ENCODE measurements at regions of chr12 and their contacts with region 1.

Region 1: DNA sequence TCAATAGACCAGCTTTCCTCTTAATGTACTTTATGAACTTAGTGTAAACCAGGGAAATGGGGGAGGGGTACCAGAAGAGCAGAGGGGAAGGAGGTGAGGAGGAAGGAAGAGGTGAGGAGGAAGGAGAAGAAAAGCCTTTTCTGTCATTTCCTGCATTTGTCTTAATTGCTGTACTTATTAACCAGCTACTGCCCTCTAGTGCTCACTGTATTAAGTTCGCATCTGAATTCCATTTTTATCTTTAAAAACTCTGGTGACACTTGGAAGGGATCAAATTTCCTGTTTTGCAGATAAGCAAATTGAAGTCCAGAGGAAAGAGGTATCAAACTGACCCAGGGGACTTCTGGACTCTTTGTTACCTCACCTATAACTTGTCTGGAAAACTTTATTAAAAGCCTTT is 22.2 kb downstream of the MANSC1 start:
- DNase-seq: no peak
- ATAC-seq: peak; percentile 41

Region 2: GRCh38 chr12:12081836-12082497 is 245.8 kb before region 1 on chr12:
- intact Hi-C with region 1: loop called (anchors 10 kb)
- DNase-seq: no peak
- ATAC-seq: peak; percentile 86

Region 3: DNA sequence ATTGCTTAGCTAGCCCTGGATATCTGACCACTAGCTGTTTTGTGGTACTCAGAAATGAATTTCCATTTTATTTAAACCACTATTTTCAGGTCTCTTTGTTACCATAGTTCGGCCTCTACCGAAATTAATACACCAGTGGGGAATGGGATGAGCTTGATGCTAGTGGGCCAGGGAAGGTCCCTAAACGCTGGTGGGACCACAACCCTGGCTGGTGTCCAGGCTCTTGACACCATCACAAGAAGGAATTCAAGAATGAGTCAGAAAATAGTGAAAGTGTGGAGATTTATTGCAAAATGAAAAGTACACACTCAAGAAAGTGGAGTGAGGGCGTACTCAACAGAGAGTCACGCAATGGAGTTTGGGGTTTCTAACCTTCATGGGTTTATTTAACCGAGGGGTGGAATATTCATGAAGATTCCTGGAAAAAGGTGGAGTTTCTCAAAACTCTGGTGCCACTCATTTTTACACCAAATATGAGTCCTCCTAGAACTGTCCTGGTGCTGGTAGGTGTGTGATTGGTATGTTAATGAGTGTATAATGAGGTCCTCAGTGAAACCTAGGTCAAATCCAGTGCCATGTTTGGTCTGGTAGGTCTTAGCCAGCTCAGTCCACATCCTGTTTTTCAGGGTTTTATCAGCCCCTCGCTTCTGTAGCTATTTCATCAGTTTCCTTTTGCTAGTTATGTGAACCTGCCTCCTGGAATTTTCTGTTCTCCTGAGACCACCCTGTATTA is 22.1 kb before region 1 on chr12:
- intact Hi-C with region 1: no loop called
- DNase-seq: no peak
- ATAC-seq: no peak

Region 4: GRCh38 chr12:12611512-12612306 is 283.9 kb after region 1 on chr12 and contains the start of gene CREBL2:
- intact Hi-C with region 1: no loop called
- DNase-seq: peak; percentile 96
- ATAC-seq: peak; percentile 97
- total RNA-seq, gene CREBL2: 67.9 TPM

Measured in sciatic nerve (tissue), 2 donors.